ENCODE measurements at regions of chr15 and their contacts with region 1.

Region 1: DNA sequence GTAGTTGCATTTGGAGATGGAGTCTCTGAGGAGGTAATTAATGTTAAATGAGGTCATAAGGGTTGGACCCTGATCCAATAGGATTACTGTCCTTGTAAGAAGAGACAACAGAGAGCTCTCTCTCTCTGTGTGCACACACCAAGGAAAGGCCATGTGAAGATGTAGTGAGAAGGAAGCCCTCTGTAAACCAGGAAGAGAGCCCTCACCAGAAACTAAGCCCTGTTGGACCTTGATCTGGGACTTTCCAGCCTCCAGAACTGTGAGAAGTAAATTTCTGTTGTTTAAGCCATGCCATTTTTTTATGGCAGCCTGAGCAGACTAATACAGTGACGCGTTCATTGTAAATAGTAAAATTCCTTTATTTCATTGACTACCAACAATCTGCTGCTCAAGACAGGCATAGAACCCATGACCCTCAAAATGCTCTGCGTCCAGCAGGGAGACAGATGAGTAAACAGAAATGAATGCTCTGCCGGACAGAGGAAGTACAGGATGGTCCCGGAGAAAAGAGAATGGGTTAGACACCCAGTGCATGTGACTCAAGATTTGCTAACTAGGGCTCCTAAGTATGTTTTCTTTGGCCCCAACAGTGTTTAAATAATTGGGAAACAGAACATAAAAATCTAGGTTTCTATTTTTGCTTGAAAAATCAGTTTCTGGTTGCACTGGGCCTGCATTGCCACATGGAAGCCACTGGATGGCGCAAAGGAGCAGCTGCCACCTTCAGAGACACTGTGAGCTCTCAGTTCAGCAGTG is 37.9 kb upstream of the TNFAIP8L3 start:
- DNase-seq: peak; percentile 90

Region 2: GRCh38 chr15:50940506-50940905 is 192.1 kb before region 1 on chr15:
- intact Hi-C with region 1: no loop called
- DNase-seq: no peak

Region 3: DNA sequence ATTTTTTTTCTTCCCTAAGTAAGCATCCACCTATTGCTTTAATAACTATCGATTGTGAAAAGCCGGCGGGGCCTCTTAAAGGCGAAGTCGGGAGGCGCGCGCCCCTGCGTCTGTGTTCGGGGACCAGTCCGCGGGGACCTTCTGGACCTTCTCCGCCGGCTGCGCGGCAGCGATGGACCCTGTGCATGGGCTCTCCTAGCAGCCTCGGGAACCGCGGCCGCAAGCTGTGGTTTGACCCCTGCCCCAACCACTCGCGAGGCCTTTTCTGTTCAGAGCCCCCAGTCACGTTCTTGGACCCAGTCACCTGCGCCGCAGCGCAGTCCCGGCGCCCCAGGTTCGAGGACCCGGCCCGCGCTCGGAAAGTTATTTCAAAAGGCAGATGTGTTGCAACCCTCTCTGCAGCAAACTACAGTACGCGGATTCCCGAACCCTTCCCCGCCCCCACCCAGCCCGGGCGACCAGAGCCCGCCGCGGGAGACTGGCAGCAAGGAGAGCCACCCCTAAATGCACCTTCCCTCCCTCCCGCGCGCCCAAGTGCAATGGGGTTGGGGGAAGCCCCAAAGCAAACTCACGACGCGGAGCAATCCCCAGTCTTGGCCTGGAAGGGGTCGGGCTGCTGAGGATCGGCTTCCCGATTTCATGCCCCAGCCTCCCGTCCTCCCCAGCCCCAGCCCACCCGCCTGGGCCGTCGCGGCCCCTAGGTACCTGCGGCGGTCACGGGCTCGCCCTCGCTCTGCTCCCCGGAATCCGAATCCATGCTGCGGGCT is 38.5 kb before region 1 on chr15:
- intact Hi-C with region 1: no loop called
- DNase-seq: peak; percentile 90

Region 4: GRCh38 chr15:51104512-51104911 is 28.1 kb before region 1 on chr15:
- intact Hi-C with region 1: loop called in 1 of 2 experiments (anchors 2 kb)
- DNase-seq: peak; percentile 94

Region 5: GRCh38 chr15:51144021-51144532 is 11.5 kb after region 1 on chr15:
- intact Hi-C with region 1: no loop called
- DNase-seq: no peak